Right ventricle myocardium superior (tissue), 1 donor: ENCODE measurements at regions of chr9 and their contacts with region 1.

Region 1: GRCh38 chr9:72856972-72857623 is 95.8 kb downstream of the ALDH1A1 start:
- DNase-seq: no peak
- ATAC-seq: peak; percentile 79

Region 2: DNA sequence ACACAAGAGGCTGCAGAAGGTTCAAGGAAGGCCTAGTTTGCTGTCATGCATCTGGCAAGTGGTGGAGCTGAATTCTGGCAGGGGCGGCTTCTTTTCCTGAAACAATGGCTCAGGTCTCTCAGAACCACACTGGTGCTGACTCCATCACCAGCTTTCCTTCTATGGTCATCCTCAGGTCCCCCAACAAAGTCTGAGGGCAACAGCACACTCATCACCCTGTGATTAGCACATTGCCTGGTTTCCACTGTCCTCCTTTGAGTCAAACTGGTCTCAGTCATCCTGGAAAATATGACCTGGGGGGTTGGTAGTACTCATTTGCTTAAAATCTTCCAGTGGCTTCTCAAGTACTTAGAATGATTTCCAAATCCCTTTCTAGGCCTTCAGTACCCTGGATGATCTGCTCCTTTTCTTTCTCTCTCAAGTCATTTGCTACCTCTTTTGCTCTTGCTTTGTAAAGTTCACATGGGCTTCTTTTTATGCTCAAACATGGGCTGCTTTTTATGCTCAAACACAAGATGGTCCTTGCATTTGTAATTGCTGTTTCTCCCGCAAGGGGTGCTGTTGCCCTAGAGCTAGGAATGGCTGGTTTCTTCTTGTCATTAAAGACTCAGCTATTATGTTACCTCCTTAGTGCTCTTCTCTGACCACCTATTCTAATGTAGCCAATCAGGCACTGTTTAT is 49.2 kb before region 1 on chr9:
- intact Hi-C with region 1: no loop called
- DNase-seq: no peak
- ATAC-seq: no peak

Region 3: GRCh38 chr9:73023025-73023541 is 166.0 kb after region 1 on chr9:
- intact Hi-C with region 1: loop called (anchors 5 kb)
- DNase-seq: peak; percentile 47
- ATAC-seq: peak; percentile 85

Region 4: GRCh38 chr9:73081979-73082657 is 225.0 kb after region 1 on chr9:
- intact Hi-C with region 1: loop called (anchors 5 kb)
- DNase-seq: no peak
- ATAC-seq: peak; percentile 63

Region 5: GRCh38 chr9:73183917-73184861 is 327.1 kb after region 1 on chr9:
- intact Hi-C with region 1: loop called (anchors 10 kb)
- DNase-seq: no peak
- ATAC-seq: no peak